Esophagus squamous epithelium (tissue), 5 donors: ENCODE measurements at regions of chr3 and their contacts with region 1.

Region 1: GRCh38 chr3:124995460-124995994 is 60.3 kb downstream of the HEG1 start:
- DNase-seq: no peak
- H3K4me3 ChIP-seq: no peak overlapping the region
- H3K27ac ChIP-seq: peak overlapping the region in 3 of 4 donors; percentile 43 to 66 (median 63)
- H3K4me1 ChIP-seq: peaks cover 0 to 43% (median 17%) of the 10 kb centered on the region in 3 donors
- H3K27me3 ChIP-seq: no peaks in the 10 kb centered on the region
- CTCF ChIP-seq: peak; percentile 51 to 81 (median 64)
- POLR2A ChIP-seq: no peak

Region 2: DNA sequence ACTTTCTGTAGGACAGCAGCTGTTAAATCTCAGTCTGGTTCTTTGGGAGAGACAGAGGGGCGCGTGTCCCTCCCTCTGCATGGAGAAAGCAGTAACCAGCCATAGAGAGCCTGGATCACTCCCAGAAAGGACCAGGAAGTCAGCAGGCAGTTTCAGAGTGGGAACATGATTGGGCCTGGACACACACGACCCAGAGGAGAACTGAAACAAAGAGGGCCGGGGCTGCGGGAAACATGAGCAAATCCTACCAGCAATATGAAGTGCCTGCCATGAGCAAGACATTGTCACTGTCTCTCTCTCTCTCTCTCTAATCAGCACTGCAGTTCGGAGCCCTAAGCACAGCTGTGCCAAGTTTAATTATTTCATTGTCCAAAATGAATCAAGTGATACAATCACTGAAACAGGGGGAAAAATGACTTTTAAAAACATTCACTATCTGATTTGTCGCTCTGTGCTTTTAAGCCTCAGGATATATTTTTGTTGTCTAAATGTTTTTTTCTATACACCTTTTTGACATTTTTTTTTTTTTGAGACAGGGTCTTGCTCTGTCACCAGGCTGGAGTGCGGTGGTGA is 78.6 kb before region 1 on chr3:
- intact Hi-C with region 1: no loop called
- DNase-seq: no peak
- H3K4me3 ChIP-seq: no peak overlapping the region
- H3K27ac ChIP-seq: no peak overlapping the region
- H3K4me1 ChIP-seq: peaks cover 0 to 8% (median 0%) of the 10 kb centered on the region in 3 donors
- H3K27me3 ChIP-seq: peaks cover 0 to 4% (median 0%) of the 10 kb centered on the region in 4 donors
- CTCF ChIP-seq: no peak
- POLR2A ChIP-seq: no peak

Region 3: GRCh38 chr3:125437631-125438435 is 442.3 kb after region 1 on chr3:
- intact Hi-C with region 1: loop called (anchors 5 kb)
- DNase-seq: no peak
- H3K4me3 ChIP-seq: no peak overlapping the region
- H3K27ac ChIP-seq: no peak overlapping the region
- H3K4me1 ChIP-seq: peaks cover 0 to 17% (median 0%) of the 10 kb centered on the region in 3 donors
- H3K27me3 ChIP-seq: peaks cover 0 to 42% (median 0%) of the 10 kb centered on the region in 4 donors
- CTCF ChIP-seq: peak; percentile 85 to 97 (median 90)
- POLR2A ChIP-seq: no peak